Head of caudate nucleus (tissue), 42 donors: ENCODE measurements at regions of chr6 and their contacts with region 1.

Region 1: DNA sequence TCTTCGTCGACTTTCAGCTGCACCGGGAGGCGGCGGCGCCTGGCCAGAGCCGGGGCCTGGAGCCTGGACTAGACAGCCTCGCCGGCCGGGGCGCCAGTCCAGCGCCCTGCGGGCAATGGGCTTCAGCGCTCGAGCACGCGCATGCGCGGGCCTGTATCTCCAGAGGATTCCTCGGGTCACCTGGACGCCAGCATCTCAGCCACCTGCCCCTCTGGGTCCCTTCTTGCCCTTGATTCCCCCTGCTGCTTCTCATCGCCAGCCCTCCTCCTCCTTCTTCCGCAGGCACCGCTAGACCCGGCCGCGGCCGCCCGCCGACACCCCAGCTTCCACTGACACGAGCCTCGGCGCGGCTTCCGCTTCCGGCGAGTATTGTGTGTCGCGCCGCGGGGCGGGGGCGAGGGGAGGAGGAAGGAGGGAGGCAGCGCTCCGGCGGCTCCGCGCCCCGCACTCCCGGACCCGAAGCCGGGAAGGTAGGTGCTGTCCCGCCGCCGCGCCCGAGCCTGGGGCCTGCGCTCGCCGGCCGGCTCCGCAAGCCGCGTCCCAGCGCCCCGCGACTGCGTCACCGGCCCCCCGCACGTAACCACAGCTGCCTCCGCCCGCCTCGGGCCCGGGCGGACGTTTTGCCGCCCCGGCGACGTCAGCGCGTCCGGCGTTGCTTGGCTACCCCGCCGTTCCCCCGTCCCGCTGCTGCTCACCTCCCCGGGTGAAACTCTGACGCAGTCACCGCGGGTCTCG is at the start of gene TRIM39:
- DNase-seq: peak; percentile 68 to 95 (median 90)

Region 2: DNA sequence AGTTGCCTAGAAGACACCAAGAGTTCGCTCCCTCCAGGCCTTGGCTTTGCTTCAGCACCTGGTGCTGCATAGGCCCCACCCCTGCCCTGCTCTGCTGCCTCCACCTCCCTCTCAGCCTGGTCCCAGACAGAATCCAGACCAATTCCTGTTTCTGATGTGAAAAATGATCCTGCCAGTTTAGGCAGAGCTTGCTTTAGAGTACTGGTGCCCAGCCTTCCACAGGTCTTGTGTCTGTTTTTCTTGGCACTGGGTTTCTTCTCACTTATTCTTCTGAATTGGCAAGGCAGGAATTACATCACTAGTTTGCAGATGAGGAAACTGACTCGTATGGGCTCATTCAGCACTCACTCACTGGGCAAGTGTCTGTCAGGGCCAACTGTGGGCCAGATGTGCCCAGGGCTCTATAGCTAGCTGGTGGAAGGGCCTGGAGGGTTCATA is 331.3 kb before region 1 on chr6:
- intact Hi-C with region 1: no loop called
- DNase-seq: no peak

Region 3: DNA sequence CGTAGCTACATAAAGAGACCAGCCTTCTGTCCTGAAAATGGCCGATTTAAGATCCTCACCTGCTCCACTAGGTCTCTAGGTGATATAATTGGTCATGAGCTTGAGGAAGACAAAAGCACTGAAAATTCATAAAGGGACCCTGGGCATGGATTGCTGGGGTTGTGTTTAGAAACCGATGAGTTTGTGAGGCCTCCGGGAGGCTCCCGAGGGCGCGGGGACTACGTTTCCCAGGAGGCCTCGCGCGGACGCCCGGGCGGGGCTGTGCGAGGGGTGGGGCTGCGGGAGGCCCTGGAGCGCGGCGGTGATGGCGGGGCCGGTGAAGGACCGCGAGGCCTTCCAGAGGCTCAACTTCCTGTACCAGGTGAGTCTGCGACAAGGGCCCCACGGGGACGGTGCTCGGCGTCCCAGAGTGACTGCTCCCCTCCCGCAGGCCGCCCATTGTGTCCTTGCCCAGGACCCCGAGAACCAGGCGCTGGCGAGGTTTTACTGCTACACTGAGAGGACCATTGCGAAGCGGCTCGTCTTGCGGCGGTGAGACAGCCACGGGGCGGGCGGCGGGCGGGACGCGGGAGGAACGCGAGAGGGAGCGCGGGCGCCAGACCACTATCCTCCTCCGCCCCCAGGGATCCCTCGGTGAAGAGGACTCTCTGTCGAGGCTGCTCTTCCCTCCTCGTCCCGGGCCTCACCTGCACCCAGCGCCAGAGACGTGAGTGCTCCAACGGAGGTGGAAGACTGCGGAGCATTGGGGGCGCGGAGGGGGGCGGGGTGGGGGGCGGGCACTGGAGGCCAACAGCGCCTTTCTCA is 18.4 kb after region 1 on chr6 and contains the start of gene RPP21:
- intact Hi-C with region 1: loop called (anchors 2 kb)
- DNase-seq: peak; percentile 77 to 96 (median 92)

Region 4: DNA sequence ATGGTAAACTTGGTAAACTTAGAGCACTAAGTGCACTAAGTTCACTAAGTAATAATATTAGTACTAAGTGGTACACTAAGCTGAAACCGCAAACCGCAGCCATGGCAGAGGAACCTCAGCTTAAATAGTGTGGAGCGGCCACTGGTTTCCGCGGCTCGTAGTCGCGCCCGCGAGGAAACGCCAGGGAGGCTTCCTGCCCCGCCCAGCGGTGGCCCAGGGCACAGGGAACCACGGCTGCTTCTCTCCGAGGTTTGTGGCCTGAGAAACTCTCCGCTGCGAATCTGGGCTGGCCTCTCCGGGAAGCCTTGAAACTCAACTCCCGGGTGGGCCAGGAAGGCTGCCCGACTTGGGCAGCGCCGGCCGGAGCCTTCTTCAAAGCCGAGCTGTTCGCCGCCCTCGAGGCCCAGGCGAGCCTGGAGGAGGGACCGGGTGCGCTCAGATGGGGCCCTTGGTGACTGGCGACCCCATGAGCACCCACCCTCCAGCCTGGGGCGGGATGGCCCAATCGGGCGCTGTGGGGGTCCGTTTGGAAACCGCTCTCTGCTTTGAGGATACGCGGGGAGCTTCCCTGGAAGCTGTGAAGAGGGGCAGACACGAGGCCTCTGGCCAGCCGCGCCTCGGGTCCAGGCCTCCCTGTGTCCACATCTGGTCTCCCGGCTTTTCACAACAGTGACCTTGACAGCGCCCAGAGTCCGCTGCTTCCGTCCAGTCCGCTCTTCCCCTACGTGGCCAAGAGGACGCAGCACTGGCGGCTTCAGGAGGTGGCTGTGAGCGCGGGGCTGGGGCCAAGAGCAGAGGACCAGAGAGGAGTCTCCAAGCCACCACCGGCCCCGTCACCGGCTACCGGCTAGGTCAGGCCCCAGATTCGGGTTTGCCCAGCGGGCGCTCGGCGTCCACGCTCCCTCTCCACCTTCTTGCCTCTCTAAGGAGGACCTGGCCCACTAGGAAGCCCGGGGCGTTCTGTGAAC is 137.2 kb after region 1 on chr6:
- intact Hi-C with region 1: no loop called
- DNase-seq: peak in 6 of 42 donors; percentile 22 to 58 (median 38)